ENCODE measurements at regions of chr15 and their contacts with region 1.

Region 1: GRCh38 chr15:46786590-46787285 is 930.6 kb upstream of the SEMA6D start:
- DNase-seq: peak in 1 of 5 donors; percentile 20
- ATAC-seq: peak in 1 of 4 donors; percentile 67
- H3K4me3 ChIP-seq: no peak overlapping the region
- H3K27ac ChIP-seq: no peak overlapping the region
- H3K4me1 ChIP-seq: no peaks in the 10 kb centered on the region
- H3K27me3 ChIP-seq: peaks cover 0 to 3% (median 0%) of the 10 kb centered on the region in 9 donors
- CTCF ChIP-seq: peak in 6 of 12 donors; percentile 29 to 44 (median 34)
- POLR2A ChIP-seq: no peak

Region 2: GRCh38 chr15:47027322-47027946 is 240.7 kb after region 1 on chr15:
- intact Hi-C with region 1: loop called in 2 of 10 experiments (anchors 2 to 5 kb)
- DNase-seq: no peak
- ATAC-seq: no peak
- H3K4me3 ChIP-seq: no peak overlapping the region
- H3K27ac ChIP-seq: no peak overlapping the region
- H3K4me1 ChIP-seq: no peaks in the 10 kb centered on the region
- H3K27me3 ChIP-seq: no peaks in the 10 kb centered on the region
- CTCF ChIP-seq: no peak
- POLR2A ChIP-seq: no peak

Region 3: DNA sequence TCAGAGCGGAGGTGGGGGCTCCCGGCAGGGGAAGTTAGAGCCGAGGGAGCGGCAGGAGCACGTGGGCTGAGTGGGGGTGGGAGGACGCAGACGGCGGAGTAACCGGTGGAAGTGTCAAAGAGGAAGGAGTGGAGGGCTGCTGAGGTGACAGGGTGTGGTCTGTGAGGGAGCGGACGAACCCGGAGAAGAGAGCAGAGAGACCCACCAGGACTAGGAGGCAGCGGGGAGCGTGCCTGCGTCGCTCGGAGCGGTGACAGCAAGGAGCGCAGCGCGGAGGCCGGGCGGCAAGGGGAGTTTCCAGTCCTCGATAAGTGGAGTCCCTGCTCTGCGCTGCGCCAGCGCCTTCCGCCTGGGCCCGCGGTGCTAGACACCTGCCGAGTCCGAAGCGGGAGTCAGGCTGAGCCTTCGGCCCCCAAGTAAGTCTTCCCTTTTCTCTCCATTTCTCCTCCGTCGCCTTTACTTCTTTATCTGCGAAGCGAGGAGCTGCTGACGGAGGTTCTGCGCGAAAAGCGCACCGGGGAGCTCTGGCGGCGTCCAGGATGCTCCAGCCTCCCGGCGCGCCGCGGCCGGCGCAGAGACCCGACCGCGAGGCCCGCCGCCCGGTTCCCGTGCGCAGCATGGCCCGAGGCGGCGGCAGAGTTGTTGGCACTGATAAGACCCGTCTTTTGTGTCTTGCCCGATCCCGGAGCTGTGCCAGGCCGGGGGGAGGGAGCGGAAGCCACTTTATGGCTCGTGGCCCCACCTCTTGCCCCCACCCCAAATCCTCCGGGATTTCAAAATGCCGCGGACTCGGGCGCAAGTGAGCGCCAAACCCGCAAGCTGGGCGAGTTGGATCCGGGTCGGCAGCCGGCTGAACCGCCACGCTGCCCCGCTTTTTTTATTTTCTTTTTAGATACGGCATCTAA is 397.5 kb after region 1 on chr15:
- intact Hi-C with region 1: loop called in 1 of 10 experiments (anchors 10 kb)
- DNase-seq: peak in 4 of 5 donors; percentile 18 to 58 (median 28)
- ATAC-seq: peak in 3 of 4 donors; percentile 41 to 70 (median 50)
- H3K4me3 ChIP-seq: peak overlapping the region; percentile 30 to 64 (median 52)
- H3K27ac ChIP-seq: no peak overlapping the region
- H3K4me1 ChIP-seq: peaks cover 0 to 19% (median 13%) of the 10 kb centered on the region in 12 donors
- H3K27me3 ChIP-seq: peaks cover 0 to 68% (median 22%) of the 10 kb centered on the region in 9 donors
- CTCF ChIP-seq: no peak
- POLR2A ChIP-seq: no peak